ENCODE measurements at regions of chr12 and their contacts with region 1.

Region 1: GRCh38 chr12:22544038-22544979 is at the start of gene C2CD5:
- DNase-seq: peak; percentile 96
- H3K4me3 Mint-ChIP-seq: peak within 1 kb of the TSS; percentile 91
- H3K27ac Mint-ChIP-seq: peak within 1 kb of the TSS; percentile 91
- H3K4me1 Mint-ChIP-seq: peaks cover 40% of the 10 kb centered on the region
- H3K27me3 Mint-ChIP-seq: no peaks in the 10 kb centered on the region
- total RNA-seq, gene C2CD5: 34.5 to 39.9 TPM

Region 2: GRCh38 chr12:21657326-21658077 is 886.8 kb before region 1 on chr12 and contains the start of gene LDHB:
- CTCF ChIA-PET with region 1: no interaction called
- intact Hi-C with region 1: loop called (anchors 1 kb)
- DNase-seq: peak; percentile 98
- H3K4me3 Mint-ChIP-seq: peak within 1 kb of the TSS; percentile 98
- H3K27ac Mint-ChIP-seq: peak within 1 kb of the TSS; percentile 98
- H3K4me1 Mint-ChIP-seq: peaks cover 59% of the 10 kb centered on the region
- H3K27me3 Mint-ChIP-seq: no peaks in the 10 kb centered on the region
- total RNA-seq, gene LDHB: 2,296 to 2,461 TPM

Region 3: GRCh38 chr12:22046090-22046967 is 498.0 kb before region 1 on chr12 and contains the start of gene CMAS:
- CTCF ChIA-PET with region 1: no interaction called
- intact Hi-C with region 1: loop called (anchors 1 kb)
- DNase-seq: peak; percentile 84
- H3K4me3 Mint-ChIP-seq: peak within 1 kb of the TSS; percentile 95
- H3K27ac Mint-ChIP-seq: peak within 1 kb of the TSS; percentile 84
- H3K4me1 Mint-ChIP-seq: peaks cover 39% of the 10 kb centered on the region
- H3K27me3 Mint-ChIP-seq: no peaks in the 10 kb centered on the region
- total RNA-seq, gene CMAS: 47.3 to 48.5 TPM

Region 4: GRCh38 chr12:22204391-22204790 is 339.9 kb before region 1 on chr12:
- CTCF ChIA-PET with region 1: no interaction called
- intact Hi-C with region 1: no loop called
- DNase-seq: no peak
- H3K4me3 Mint-ChIP-seq: no peak overlapping the region
- H3K27ac Mint-ChIP-seq: no peak overlapping the region
- H3K4me1 Mint-ChIP-seq: no peaks in the 10 kb centered on the region
- H3K27me3 Mint-ChIP-seq: no peaks in the 10 kb centered on the region

Region 5: GRCh38 chr12:22529281-22530060 is 14.8 kb before region 1 on chr12:
- CTCF ChIA-PET with region 1: interaction called, 4 read pairs
- intact Hi-C with region 1: loop called (anchors 2 kb)
- DNase-seq: no peak
- H3K4me3 Mint-ChIP-seq: no peak overlapping the region
- H3K27ac Mint-ChIP-seq: no peak overlapping the region
- H3K4me1 Mint-ChIP-seq: peaks cover 5% of the 10 kb centered on the region
- H3K27me3 Mint-ChIP-seq: no peaks in the 10 kb centered on the region

Region 6: GRCh38 chr12:22577667-22578066 is 33.4 kb after region 1 on chr12:
- CTCF ChIA-PET with region 1: no interaction called
- intact Hi-C with region 1: no loop called
- DNase-seq: no peak
- H3K4me3 Mint-ChIP-seq: no peak overlapping the region
- H3K27ac Mint-ChIP-seq: no peak overlapping the region
- H3K4me1 Mint-ChIP-seq: no peaks in the 10 kb centered on the region
- H3K27me3 Mint-ChIP-seq: no peaks in the 10 kb centered on the region

Region 7: GRCh38 chr12:22658214-22658613 is 113.9 kb after region 1 on chr12:
- CTCF ChIA-PET with region 1: no interaction called
- intact Hi-C with region 1: loop called (anchors 1 kb)
- DNase-seq: peak; percentile 54
- H3K4me3 Mint-ChIP-seq: peak overlapping the region; percentile 26
- H3K27ac Mint-ChIP-seq: peak overlapping the region; percentile 58
- H3K4me1 Mint-ChIP-seq: peaks cover 26% of the 10 kb centered on the region
- H3K27me3 Mint-ChIP-seq: no peaks in the 10 kb centered on the region

Region 8: GRCh38 chr12:22670762-22671161 is 126.5 kb after region 1 on chr12:
- CTCF ChIA-PET with region 1: interaction called, 7 read pairs
- intact Hi-C with region 1: loop called (anchors 5 kb)
- DNase-seq: no peak
- H3K4me3 Mint-ChIP-seq: no peak overlapping the region
- H3K27ac Mint-ChIP-seq: no peak overlapping the region
- H3K4me1 Mint-ChIP-seq: no peaks in the 10 kb centered on the region
- H3K27me3 Mint-ChIP-seq: no peaks in the 10 kb centered on the region

Measured in activated naive CD4-positive, alpha-beta T cell treated with anti-CD3 and anti-CD28 coated beads for 36 hours (primary cell).